ENCODE measurements at regions of chr5 and their contacts with region 1.

Region 1: DNA sequence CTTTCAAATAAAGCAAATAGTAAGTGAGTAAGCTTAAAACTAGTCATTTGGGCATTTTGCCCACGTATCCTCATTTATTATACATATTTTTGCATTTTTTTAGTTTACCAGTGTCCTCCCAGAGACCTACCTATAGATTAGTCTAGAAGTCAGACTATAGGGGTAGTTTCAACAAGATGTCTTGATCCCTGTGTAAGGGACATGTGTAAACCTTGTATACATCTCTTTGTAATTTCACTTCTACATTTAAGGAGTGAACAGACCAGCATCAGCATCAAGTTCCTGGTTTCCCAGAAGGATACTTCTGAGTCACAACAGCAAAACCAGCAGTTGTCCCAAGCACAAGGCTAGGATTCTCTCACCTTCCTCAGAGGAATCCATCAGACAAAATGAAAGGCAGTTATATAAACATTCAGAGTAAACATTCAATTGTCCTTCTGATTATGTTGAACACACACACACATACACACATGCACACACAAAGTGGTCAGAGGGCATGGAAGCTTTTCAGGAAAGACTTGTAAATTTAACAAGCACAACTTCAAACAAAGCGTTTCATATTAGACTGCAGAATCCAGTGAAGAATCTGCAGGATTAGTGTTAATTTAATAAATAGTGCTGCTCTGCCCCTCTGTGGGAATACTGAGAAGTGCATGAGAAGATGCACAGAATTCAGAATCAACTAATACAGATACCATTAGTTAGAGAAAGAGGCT is 55.4 kb downstream of the HINT1 start:
- DNase-seq: peak; percentile 49
- H3K4me3 Mint-ChIP-seq: no peak overlapping the region
- H3K27ac Mint-ChIP-seq: no peak overlapping the region
- H3K4me1 Mint-ChIP-seq: no peaks in the 10 kb centered on the region
- H3K27me3 Mint-ChIP-seq: no peaks in the 10 kb centered on the region
- CTCF ChIP-seq: peak; percentile 66

Region 2: GRCh38 chr5:129904102-129904666 is 1205.5 kb before region 1 on chr5 and contains the start of gene CHSY3:
- CTCF ChIA-PET with region 1: no interaction called
- intact Hi-C with region 1: loop called (anchors 1 kb)
- DNase-seq: peak; percentile 88
- H3K4me3 Mint-ChIP-seq: peak within 1 kb of the TSS; percentile 80
- H3K27ac Mint-ChIP-seq: peak within 1 kb of the TSS; percentile 37
- H3K4me1 Mint-ChIP-seq: peaks cover 23% of the 10 kb centered on the region
- H3K27me3 Mint-ChIP-seq: peaks cover 30% of the 10 kb centered on the region
- CTCF ChIP-seq: no peak
- total RNA-seq, gene CHSY3: 1.1 and 1.5 TPM in 2 replicates

Region 3: GRCh38 chr5:130109152-130109551 is 1000.5 kb before region 1 on chr5:
- CTCF ChIA-PET with region 1: no interaction called
- intact Hi-C with region 1: loop called (anchors 5 kb)
- DNase-seq: peak; percentile 6
- H3K4me3 Mint-ChIP-seq: no peak overlapping the region
- H3K27ac Mint-ChIP-seq: no peak overlapping the region
- H3K4me1 Mint-ChIP-seq: no peaks in the 10 kb centered on the region
- H3K27me3 Mint-ChIP-seq: no peaks in the 10 kb centered on the region
- CTCF ChIP-seq: peak; percentile 63

Region 4: DNA sequence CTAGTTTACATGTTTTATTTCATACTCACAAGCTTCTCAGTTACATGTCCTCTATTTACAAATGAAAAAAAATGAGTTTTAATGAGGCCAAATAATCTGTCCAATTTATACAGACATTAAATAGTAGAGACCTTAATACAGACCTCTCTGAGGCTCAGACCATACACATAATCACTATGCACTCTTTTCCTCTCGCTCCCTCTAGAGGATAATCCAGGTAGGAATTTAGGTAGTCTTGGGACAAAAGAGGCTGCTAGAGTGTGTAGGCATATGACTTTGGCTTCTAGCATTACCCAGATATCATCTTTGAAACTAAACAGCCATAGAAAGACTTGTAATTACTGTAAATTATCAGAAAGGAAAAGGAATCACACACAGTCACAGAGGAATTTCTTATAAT is 389.3 kb before region 1 on chr5:
- CTCF ChIA-PET with region 1: no interaction called
- intact Hi-C with region 1: loop called (anchors 10 kb)
- DNase-seq: peak; percentile 24
- H3K4me3 Mint-ChIP-seq: no peak overlapping the region
- H3K27ac Mint-ChIP-seq: no peak overlapping the region
- H3K4me1 Mint-ChIP-seq: peaks cover 10% of the 10 kb centered on the region
- H3K27me3 Mint-ChIP-seq: no peaks in the 10 kb centered on the region
- CTCF ChIP-seq: peak; percentile 70

Region 5: DNA sequence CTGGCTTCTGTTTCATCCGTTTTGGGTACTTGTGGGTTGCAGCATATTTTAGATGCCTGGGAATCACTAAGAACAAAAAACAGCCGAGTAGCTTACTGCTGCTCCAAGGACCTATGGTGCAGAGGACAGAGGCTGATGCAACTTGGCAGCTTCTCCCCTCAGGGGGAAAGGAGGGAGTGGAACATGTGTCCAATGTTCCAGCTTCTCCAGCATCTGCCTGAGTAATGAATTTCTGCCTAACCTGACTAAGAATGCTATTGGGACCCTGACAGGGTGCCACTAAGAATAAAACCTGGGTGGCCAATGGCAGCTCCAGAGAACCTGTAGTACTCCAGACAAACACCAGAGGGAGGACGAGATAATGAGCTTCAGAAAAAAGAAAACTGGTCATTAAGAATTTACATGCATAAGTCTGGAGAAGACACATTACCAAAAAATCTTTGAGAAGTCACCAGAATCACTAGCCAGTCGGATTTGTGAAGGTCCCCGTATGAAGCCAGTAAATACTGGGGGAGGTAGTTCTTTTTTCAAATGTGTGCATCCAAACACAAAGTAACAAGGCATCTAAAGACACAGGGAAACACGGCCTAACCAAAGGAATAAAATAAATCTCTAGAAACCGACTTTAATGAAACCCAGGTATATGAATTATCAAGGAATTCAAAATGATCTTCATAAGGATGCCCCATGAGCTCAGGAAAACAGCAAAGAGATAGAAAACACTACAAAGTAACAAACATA is 238.2 kb before region 1 on chr5:
- CTCF ChIA-PET with region 1: interaction called, 5 read pairs
- intact Hi-C with region 1: loop called (anchors 1 kb)
- DNase-seq: peak; percentile 62
- H3K4me3 Mint-ChIP-seq: no peak overlapping the region
- H3K27ac Mint-ChIP-seq: no peak overlapping the region
- H3K4me1 Mint-ChIP-seq: no peaks in the 10 kb centered on the region
- H3K27me3 Mint-ChIP-seq: no peaks in the 10 kb centered on the region
- CTCF ChIP-seq: peak; percentile 80

Region 6: GRCh38 chr5:131382407-131383395 is 273.0 kb after region 1 on chr5:
- CTCF ChIA-PET with region 1: no interaction called
- intact Hi-C with region 1: loop called (anchors 5 kb)
- DNase-seq: peak; percentile 63
- H3K4me3 Mint-ChIP-seq: no peak overlapping the region
- H3K27ac Mint-ChIP-seq: no peak overlapping the region
- H3K4me1 Mint-ChIP-seq: peaks cover 33% of the 10 kb centered on the region
- H3K27me3 Mint-ChIP-seq: no peaks in the 10 kb centered on the region
- CTCF ChIP-seq: peak; percentile 80

Region 7: DNA sequence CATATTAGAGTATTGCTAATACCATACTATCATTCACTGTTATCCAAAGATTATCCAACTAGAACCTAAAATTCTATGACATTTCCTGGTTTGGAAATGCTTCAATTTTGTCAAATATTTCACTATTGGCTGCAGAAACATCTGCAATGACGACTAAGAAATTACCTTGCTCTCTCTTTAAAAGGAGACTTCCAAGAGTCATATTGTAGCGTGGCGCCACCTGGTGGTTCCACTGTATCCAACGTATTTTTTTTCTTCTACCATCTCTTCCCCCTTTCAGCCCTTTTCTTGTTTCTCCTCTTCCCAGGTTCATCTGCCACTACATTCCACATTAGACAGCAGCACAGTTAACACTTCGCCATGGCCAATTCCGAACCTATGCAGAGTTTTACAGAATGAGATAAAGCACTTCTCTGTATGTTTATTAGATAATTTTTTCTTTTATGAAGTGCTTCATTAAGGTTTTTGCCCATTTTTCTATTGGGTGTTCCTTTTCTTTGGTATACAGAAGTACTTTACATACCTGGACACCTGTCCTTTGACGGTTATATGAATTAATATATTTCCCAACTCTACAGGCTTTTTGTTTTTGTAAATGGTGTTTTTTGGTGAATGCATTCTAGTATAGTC is 307.7 kb after region 1 on chr5:
- CTCF ChIA-PET with region 1: no interaction called
- intact Hi-C with region 1: loop called (anchors 5 kb)
- DNase-seq: peak; percentile 86
- H3K4me3 Mint-ChIP-seq: no peak overlapping the region
- H3K27ac Mint-ChIP-seq: peak overlapping the region; percentile 42
- H3K4me1 Mint-ChIP-seq: no peaks in the 10 kb centered on the region
- H3K27me3 Mint-ChIP-seq: no peaks in the 10 kb centered on the region
- CTCF ChIP-seq: peak; percentile 80

Measured in Calu3 (cell line).